ENCODE measurements at regions of chr3 and their contacts with region 1.

Region 1: DNA sequence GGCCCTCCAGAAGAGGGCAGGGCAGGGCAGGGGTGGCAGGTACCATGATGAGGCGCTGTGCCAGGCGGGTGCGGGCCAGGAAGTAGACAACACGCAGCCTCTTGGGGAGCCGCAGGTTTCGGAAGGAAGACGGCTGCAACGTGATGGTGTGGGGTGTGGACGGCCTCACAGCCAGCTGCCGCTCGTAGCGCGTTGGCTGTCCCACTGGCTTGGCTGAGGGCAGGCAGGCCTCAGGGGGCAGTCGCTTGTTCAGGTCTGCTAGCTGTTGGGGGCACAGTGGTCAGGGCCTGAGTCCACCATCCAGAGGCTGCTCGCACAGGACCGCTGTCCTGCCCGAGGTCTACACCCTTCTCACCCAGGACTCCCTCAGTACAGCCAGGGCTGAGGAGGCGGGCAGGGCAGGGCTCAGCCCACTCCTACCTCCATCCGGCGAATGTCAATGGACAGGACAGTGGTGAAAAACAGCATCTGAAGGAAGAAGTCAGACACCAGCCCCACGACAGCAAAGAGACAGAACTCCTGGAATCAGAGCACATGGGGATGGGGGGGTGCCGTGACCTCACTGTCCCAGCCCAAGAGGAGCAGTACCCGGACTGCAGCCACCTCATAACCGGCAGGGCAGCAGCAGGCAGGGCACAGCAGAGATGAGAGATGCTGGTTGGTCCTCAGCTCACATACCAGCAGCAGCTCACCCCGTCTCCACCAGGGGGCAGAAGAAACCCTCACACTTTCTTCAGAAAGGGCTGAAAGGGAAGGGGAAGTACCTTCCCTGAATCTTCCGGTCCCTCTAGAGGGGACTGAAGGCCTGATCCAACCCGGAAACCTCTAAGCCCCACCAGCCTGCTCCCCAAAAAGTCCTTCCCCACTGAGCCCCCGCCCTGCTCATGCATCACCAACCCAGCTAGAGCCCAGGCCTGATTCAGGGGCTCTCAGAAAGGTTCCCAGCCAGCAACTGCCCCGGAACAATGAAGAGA is 40.0 kb downstream of the PTPN23 start:
- DNase-seq: peak; percentile 47
- H3K4me3 ChIP-seq: no peak overlapping the region
- H3K27me3 ChIP-seq: no peaks in the 10 kb centered on the region
- CTCF ChIP-seq: peak; percentile 98

Region 2: GRCh38 chr3:46947981-46948791 is 472.6 kb before region 1 on chr3:
- CTCF ChIA-PET with region 1: no interaction called
- POLR2A ChIA-PET with region 1: no interaction called
- DNase-seq: no peak
- H3K4me3 ChIP-seq: no peak overlapping the region
- H3K27me3 ChIP-seq: no peaks in the 10 kb centered on the region
- CTCF ChIP-seq: no peak

Region 3: GRCh38 chr3:47404955-47405790 is 15.6 kb before region 1 on chr3:
- CTCF ChIA-PET with region 1: interaction called, 44 read pairs
- POLR2A ChIA-PET with region 1: no interaction called
- DNase-seq: no peak
- H3K4me3 ChIP-seq: no peak overlapping the region
- H3K27me3 ChIP-seq: no peaks in the 10 kb centered on the region
- CTCF ChIP-seq: no peak

Region 4: DNA sequence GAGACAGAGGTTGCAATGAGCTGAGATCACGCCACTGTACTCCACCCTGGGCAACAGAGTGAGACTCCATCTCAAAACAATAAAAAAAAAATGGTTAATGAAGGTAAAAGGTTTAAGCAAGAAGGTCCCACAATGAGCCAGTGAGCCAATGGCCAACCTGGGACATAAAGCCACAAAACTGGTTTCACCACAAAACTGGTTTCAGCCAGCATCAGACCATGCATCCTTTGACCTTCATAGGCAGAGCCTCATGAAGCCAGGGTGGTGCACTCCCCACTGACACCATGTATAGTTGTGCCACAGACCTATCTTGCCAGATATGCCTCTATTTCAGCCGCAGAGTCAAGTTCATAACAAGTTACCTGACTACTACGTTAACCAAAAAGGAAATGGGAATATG is 13.0 kb after region 1 on chr3:
- CTCF ChIA-PET with region 1: interaction called, 23 read pairs
- POLR2A ChIA-PET with region 1: no interaction called
- DNase-seq: no peak
- H3K4me3 ChIP-seq: no peak overlapping the region
- H3K27me3 ChIP-seq: no peaks in the 10 kb centered on the region
- CTCF ChIP-seq: no peak

Region 5: DNA sequence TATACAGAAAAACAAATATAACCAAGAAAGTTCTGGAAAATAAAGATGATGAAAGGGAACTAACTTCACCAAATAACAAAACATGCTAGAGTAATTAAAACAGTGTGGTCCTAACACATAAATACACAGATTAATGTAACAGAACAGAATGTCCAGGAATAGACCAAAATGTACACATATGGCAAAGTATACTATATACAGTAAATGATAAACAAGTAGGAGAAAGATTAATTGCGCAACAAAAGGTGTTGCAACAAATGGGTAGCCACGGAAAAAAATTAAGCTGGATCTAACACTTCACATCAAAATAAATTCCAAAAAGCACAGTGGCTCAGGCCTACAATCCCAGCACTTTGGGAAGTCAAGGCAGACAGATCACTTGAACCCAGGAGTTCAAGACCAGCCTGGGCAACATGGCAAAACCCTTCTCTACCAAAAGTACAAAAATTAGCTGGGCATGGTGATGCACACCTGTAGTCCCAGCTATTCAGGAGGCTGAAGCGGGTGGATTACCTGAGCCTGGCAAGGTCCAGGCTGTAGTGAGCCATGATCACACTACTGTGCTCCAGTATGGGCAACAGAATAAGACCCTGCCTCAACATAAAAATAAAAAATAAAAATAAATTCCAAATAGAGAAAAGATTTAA is 35.1 kb after region 1 on chr3:
- CTCF ChIA-PET with region 1: interaction called, 12 read pairs
- POLR2A ChIA-PET with region 1: no interaction called
- DNase-seq: no peak
- H3K4me3 ChIP-seq: no peak overlapping the region
- H3K27me3 ChIP-seq: no peaks in the 10 kb centered on the region
- CTCF ChIP-seq: no peak

Region 6: GRCh38 chr3:47475570-47476329 is 55.0 kb after region 1 on chr3 and contains the start of gene SCAP:
- CTCF ChIA-PET with region 1: interaction called, 71 read pairs
- POLR2A ChIA-PET with region 1: no interaction called
- DNase-seq: no peak
- H3K4me3 ChIP-seq: peak within 1 kb of the TSS; percentile 68
- H3K27me3 ChIP-seq: no peaks in the 10 kb centered on the region
- CTCF ChIP-seq: peak; percentile 92
- polyA plus RNA-seq, gene SCAP: 17.3 and 30.2 TPM in 2 replicates

Region 7: DNA sequence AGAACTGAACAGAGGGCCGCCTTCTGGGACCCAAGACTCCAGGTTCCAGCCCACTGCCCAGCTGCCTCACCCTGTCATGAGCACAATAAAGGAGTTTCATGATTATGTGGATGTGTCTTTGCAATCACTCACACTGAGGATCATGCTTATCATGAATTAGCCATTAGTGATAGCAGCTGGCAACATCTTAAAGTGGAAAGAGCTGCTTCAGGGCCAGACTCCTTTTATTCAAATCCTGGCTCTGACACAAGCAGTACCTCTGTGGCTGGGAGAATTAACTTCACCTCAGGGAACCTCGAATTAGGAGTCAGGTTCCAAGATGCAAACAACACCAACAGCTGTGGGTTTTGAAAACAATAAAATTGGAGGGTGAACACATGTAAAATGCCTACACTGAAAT is 61.6 kb after region 1 on chr3:
- CTCF ChIA-PET with region 1: interaction called, 15 read pairs
- POLR2A ChIA-PET with region 1: interaction called, 6 read pairs
- DNase-seq: no peak
- H3K4me3 ChIP-seq: no peak overlapping the region
- H3K27me3 ChIP-seq: no peaks in the 10 kb centered on the region
- CTCF ChIP-seq: no peak

Measured in BJ (cell line).